HEK293T (cell line): ENCODE measurements at regions of chr1 and their contacts with region 1.

Region 1: DNA sequence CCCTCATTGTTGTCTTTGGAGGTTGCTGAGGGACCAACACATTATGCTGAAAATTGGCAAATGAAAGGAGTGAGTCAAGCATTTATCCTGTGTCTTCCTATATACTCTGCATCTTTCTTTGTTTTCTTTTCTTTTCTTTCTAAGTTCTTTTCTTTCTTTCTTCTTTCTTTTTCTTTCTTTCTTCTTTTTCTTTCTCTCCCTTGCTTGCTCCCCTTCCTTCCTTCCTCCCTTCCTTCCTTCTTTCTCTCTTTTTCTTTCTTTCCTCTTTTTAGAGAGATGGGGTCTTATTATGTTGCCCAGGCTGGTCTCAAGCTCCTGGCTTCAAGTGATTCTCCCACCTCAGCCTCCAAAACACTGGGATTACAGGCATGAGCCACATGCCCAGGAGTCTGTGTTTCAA is 28.3 kb upstream of the COX20 start:
- DNase-seq: no peak

Region 2: DNA sequence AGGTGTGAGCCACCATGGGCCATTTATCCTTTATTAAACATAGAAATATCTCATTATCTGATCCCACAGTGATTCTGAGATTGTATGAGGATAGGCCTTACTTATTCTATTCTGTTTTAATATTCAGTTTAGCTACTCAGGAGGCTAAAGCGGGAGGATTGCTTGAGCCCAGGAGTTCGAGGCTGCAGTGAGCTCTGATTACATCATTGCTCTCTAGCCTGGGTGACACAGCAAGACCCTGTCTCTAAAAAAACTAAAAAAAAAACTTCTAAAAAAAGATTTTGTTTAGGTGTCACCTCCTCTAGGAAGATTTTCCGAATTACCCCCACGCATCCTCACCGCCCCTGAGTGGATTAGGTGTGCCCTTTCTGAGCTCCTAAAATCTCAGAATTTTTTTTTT is 71.5 kb after region 1 on chr1:
- CTCF ChIA-PET with region 1: interaction called, 15 read pairs
- POLR2A ChIA-PET with region 1: no interaction called
- DNase-seq: no peak